Heart right ventricle (tissue), 16 donors: ENCODE measurements at regions of chr17 and their contacts with region 1.

Region 1: DNA sequence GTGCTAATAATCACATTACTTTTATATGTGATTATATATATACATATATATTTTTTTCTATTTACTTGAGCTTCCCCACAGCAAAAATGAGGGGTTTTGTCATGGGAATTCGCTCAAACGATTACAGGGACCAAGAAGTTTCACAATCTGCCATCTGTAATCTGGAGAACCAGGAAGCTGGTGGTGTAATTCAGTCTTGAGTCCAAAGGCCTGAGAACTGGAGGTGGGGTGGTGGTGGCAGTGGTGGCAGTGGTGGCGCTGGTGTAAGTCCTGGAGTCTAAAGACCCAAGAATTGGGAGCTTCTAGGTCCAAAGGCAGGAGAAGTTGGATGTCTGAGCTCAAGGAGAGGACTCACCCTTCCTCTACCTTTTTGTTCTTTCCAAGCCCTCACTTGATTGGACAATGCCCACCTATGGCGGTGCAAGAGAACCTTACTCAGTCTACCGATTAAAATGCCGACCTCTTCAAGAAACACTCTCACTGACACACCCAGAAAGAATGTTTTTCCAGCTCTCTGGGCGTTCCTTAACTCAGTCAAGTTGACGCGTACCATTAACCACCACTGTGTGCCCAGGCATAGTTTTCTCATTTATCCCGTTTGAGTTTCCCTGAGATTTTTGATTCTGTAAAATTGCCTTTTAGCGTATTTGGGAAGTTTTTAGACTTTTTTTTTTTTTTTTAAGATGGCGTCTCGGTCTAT is 31.9 kb downstream of the POLR2A start:
- DNase-seq: no peak
- ATAC-seq: peak in 2 of 8 donors; percentile 14 to 29
- H3K4me3 ChIP-seq: no peak overlapping the region
- H3K27ac ChIP-seq: no peak overlapping the region
- H3K4me1 ChIP-seq: peaks cover 0 to 15% (median 0%) of the 10 kb centered on the region in 9 donors
- H3K27me3 ChIP-seq: no peaks in the 10 kb centered on the region
- CTCF ChIP-seq: no peak

Region 2: DNA sequence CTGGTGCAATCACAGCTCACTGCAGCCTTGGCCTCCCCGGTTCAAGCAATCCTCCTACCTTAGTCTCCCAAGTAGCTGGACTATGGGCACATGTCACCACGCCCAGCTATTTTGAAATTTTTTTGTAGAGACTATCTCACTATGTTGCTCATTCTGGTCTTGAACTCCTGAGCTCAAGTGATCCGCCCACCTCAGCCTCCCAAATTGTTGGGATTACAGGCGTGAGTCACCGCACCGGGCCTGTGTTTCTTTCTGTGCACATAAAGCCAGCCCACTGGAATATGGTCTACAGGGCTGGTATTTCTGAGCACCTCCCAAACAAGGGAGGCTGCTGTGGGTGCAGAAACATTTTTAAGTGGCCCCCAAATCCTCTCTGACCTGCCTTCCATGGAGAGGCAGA is 152.8 kb before region 1 on chr17:
- intact Hi-C with region 1: loop called in 1 of 10 experiments (anchors 10 kb)
- DNase-seq: no peak
- ATAC-seq: no peak
- H3K4me3 ChIP-seq: no peak overlapping the region
- H3K27ac ChIP-seq: no peak overlapping the region
- H3K4me1 ChIP-seq: no peaks in the 10 kb centered on the region
- H3K27me3 ChIP-seq: no peaks in the 10 kb centered on the region
- CTCF ChIP-seq: no peak

Region 3: GRCh38 chr17:7561028-7561575 is 45.0 kb after region 1 on chr17:
- intact Hi-C with region 1: loop called (anchors 1 to 10 kb)
- DNase-seq: peak; percentile 91 to 92
- ATAC-seq: peak; percentile 66 to 86 (median 78)
- H3K4me3 ChIP-seq: peak overlapping the region; percentile 84 to 100 (median 96)
- H3K27ac ChIP-seq: peak overlapping the region; percentile 83 to 99 (median 94)
- H3K4me1 ChIP-seq: peaks cover 41 to 73% (median 69%) of the 10 kb centered on the region in 9 donors
- H3K27me3 ChIP-seq: no peaks in the 10 kb centered on the region
- CTCF ChIP-seq: peak; percentile 80 to 93 (median 87)

Region 4: DNA sequence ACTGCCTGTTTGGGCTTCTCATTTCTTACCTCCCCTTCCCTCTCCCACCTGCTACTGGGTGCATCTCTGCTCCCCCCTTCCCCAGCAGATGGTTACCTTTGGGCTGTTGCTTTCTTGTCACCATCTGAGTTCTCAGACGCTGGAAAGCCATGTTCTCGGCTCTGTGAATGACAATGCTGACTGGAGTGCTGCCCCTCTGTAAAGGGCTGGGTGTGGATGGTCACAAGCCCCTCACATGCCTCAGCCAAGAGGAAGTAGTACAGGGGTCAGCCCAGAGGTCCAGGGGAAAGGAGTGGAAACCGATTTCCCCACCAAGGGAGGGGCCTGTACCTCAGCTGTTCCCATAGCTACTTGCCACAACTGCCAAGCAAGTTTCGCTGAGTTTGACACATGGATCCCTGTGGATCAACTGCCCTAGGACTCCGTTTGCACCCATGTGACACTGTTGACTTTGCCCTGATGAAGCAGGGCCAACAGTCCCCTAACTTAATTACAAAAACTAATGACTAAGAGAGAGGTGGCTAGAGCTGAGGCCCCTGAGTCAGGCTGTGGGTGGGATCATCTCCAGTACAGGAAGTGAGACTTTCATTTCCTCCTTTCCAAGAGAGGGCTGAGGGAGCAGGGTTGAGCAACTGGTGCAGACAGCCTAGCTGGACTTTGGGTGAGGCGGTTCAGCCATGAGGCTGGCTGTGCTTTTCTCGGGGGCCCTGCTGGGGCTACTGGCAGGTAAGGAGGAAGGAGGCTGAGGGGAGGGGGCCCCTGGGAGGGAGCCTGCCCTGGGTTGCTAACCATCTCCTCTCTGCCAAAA is 63.1 kb after region 1 on chr17 and contains the start of gene CD68:
- intact Hi-C with region 1: no loop called
- DNase-seq: peak; percentile 47 to 64
- ATAC-seq: peak; percentile 12 to 60 (median 16)
- H3K4me3 ChIP-seq: peak within 1 kb of the TSS in 7 of 10 donors; percentile 18 to 66 (median 40)
- H3K27ac ChIP-seq: peak within 1 kb of the TSS; percentile 13 to 94 (median 78)
- H3K4me1 ChIP-seq: peaks cover 18 to 85% (median 52%) of the 10 kb centered on the region in 9 donors
- H3K27me3 ChIP-seq: no peaks in the 10 kb centered on the region
- CTCF ChIP-seq: no peak
- total RNA-seq, gene CD68: 4.7 to 128 (median 13.0) TPM

Region 5: DNA sequence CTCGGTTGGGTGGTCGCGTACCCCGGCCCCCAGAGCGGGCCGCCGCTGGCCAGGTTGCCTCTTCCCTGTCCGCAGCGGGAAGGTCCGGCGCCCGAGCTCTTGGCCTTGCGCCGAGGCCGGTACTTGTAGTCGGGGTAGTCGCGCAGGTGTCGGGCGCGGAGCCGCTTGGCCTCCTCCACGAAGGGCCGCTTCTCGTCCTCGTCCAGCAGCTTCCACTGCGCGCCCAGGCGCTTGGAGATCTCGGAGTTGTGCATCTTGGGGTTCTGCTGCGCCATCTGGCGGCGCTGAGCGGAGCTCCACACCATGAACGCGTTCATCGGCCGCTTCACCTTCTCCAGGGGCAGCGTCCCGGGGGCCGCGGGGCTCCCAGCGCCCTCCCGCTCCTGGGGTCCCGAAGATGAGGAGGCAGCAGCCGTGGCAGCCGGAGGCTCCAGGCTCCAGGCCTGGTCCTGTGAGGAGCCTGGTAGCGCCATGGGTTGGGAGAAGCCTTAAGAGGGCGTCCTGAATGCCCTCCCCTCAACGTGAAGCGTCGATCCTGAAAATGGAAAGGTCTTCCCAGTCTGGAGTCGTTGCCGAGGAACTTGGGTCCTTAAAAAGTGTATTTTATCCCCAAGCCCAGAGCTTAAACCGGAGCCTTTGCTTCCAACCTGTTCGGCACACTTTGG is 73.3 kb after region 1 on chr17:
- intact Hi-C with region 1: loop called in 3 of 10 experiments (anchors 1 to 10 kb)
- DNase-seq: peak; percentile 80 to 85
- ATAC-seq: peak; percentile 79 to 88 (median 84)
- H3K4me3 ChIP-seq: peak overlapping the region in 9 of 10 donors; percentile 27 to 58 (median 49)
- H3K27ac ChIP-seq: peak overlapping the region in 9 of 10 donors; percentile 8 to 68 (median 57)
- H3K4me1 ChIP-seq: peaks cover 8 to 47% (median 33%) of the 10 kb centered on the region in 9 donors
- H3K27me3 ChIP-seq: no peaks in the 10 kb centered on the region
- CTCF ChIP-seq: peak; percentile 63 to 96 (median 91)

Region 6: DNA sequence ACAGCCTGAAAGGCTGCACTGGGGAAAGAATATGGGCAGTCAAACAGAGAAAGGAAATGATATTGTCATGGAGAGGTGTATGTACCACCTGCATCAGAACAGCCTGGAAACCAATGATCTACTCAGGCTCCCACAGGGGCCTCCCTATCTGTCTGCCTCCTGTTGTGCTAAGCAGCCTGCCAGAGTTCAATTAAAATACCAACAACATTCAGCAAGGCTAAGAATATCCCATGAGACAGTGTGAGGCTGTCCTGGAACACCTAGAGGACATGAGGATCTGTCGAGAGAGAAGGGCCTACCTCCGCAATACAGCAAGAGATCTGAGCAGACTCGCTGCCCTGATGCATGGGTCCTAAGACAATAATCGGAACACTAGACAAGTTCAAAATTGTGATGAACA is 90.2 kb after region 1 on chr17:
- intact Hi-C with region 1: no loop called
- DNase-seq: peak in 1 of 2 donors; percentile 44
- ATAC-seq: peak; percentile 86 to 98 (median 94)
- H3K4me3 ChIP-seq: no peak overlapping the region
- H3K27ac ChIP-seq: peak overlapping the region; percentile 52 to 91 (median 77)
- H3K4me1 ChIP-seq: peaks cover 3 to 49% (median 18%) of the 10 kb centered on the region in 9 donors
- H3K27me3 ChIP-seq: no peaks in the 10 kb centered on the region
- CTCF ChIP-seq: no peak